Left colon (tissue), 2 donors: ENCODE measurements at regions of chr12 and their contacts with region 1.

Region 1: DNA sequence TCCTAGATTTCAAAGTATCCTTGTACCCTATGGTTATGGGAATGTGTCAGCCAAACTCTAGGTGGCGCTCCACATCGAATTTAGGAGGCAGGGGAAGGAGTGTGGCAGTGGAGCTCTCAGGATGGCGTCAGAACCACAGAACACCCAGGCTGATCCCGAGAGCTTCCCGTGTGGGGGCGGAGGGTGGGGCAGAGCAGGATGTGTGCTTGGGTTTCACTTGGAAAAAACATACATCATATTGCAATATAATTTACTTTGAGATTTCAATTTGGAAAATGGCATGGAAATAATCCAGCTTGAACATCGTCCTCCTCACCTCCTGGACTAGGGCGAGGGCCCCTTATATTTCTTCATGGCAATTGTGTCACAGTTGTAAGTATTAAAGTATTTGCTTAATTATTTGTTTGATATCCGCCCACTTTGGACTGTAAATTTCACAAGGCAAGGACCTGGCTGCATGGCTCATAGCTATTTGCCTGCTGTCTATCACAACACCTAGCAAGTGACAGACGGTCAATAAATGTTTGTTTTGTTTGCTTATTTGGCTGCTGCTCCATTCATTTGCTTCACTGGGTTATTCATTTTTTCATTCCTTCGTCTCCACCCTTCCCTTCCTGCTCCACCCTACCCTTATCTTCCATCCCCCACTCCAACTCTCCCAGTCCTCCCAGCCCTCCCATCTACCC is 221.5 kb upstream of the HMGA2 start:
- DNase-seq: peak; percentile 78 to 83
- ATAC-seq: peak; percentile 83

Region 2: DNA sequence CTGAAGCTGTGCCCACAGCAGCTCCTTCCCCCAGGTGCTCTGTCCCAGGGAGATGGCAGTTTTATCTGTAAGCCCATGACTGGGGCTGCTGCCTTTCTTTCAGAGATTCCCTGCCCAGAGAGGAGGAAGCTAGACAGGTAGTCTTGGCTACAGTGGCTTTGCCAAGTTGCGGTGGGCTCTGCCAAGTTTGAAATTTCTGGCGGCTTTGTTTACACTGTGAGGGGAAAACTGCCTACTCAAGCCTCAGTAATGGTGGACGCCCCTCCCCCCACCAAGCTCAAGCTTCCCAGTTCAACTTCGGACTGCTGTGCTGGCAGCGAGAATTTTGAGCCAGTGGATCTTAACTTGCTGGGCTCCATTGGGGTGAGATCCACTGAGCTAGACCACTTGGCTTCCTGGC is 199.6 kb before region 1 on chr12:
- intact Hi-C with region 1: no loop called
- DNase-seq: no peak
- ATAC-seq: no peak

Region 3: DNA sequence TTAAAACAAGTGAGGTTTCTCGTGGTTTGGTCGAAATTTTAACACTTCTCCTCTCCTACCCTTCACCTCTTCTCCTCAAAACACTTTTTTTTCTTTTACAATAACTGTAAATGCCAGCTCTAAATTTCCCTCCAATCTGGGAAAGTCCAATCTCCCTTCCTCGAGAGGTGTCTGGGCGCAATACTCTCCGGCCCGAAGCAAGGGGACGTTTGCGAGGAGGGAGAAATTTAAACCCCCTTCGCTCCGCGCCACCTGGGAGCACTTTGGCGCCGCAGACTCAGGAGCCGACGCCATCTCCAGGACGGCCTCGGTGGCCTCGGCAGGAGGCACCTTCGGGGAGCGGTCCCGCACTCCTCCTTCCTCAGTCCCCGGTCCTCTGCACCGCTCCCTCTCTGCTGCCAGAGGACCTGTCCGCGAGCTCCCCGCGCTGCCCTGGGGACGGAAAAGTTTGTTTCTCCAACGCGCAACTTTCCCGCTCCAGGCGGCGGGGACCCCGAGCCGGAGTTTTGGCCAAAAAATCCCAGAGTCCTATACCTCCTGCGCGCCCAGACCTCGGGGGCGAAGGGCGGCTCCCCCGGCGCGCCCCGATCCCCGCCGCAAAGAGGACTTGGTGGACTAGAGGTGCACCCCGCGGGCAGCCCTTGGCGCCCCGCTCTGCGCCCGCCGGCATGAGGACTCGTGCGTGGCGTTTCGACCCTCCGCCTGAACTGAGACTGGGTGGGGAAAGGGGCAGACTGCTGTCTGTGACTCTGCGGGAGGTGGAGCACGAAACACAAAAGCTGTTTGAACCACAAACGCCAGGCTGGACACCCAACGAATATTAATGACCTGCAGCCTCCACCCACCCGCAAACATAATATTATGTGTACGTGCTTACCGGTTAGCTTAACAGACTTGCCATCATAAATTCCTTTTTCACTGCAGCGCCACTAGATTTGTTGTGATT is 126.4 kb after region 1 on chr12:
- intact Hi-C with region 1: no loop called
- DNase-seq: peak in 1 of 2 donors; percentile 6
- ATAC-seq: peak; percentile 58

Region 4: GRCh38 chr12:65999564-66000280 is 397.0 kb after region 1 on chr12:
- intact Hi-C with region 1: loop called in 1 of 2 experiments (anchors 10 kb)
- DNase-seq: no peak
- ATAC-seq: no peak